ENCODE measurements at regions of chr7 and their contacts with region 1.

Region 1: GRCh38 chr7:156836443-156836842 is 56.5 kb downstream of the LMBR1 start:
- DNase-seq: no peak
- CTCF ChIP-seq: no peak

Region 2: GRCh38 chr7:155804897-155805825 is 1031.3 kb before region 1 on chr7:
- in situ Hi-C with region 1: loop called (anchors 10 kb)
- DNase-seq: peak; percentile 94
- CTCF ChIP-seq: peak; percentile 83